ENCODE measurements at regions of chr6 and their contacts with region 1.

Region 1: DNA sequence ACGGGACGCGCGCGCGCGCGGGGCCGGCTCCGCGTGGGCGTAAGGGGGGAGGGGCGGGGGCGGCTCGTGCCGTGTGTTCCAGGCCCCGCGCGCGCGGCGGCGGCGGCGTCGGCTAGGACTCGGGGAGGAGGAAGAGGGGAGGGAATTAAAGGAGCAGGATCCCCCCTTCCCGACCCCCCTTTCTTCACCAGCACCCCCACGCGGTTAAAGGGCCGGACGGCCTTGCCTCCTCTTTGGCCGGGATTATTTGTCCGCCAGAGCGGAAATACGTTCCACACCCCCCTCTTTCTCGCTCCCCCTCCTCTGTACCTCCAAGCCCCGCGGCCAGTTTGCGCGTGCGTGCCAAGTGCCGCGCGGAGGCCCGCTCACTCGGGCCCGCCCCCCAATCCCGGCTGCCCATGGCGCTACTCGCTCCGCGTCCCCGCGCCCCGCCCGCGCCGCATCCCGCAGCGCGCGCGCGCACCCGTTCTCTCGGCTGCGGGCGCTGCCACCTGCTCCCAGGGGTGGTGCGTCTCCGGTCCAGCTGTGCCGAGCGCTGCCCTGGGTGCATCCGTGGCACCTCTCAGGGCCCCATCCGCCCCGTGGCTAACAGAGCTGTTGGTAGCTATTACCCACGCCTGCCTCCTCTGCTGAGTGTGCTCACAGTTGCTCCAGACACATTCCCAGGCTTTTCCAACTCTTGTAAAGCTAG is at the start of gene ZBTB12:
- DNase-seq: peak; percentile 92 to 94
- H3K4me3 ChIP-seq: peak within 1 kb of the TSS; percentile 68
- H3K4me3 Mint-ChIP-seq: peak within 1 kb of the TSS; percentile 73
- H3K27ac Mint-ChIP-seq: peak within 1 kb of the TSS; percentile 58
- H3K4me1 ChIP-seq: peaks cover 19% of the 10 kb centered on the region
- H3K4me1 Mint-ChIP-seq: peaks cover 20% of the 10 kb centered on the region
- H3K27me3 ChIP-seq: no peaks in the 10 kb centered on the region
- H3K27me3 Mint-ChIP-seq: no peaks in the 10 kb centered on the region
- CTCF ChIP-seq: no peak
- total RNA-seq, gene ZBTB12: 9.6 and 11.7 TPM in 2 replicates

Region 2: GRCh38 chr6:31887173-31888007 is 14.7 kb before region 1 on chr6:
- CTCF ChIA-PET with region 1: interaction called, 11 read pairs
- POLR2A ChIA-PET with region 1: interaction called, 3 read pairs
- intact Hi-C with region 1: no loop called
- DNase-seq: no peak
- H3K4me3 ChIP-seq: no peak overlapping the region
- H3K4me3 Mint-ChIP-seq: no peak overlapping the region
- H3K27ac Mint-ChIP-seq: no peak overlapping the region
- H3K4me1 ChIP-seq: no peaks in the 10 kb centered on the region
- H3K4me1 Mint-ChIP-seq: no peaks in the 10 kb centered on the region
- H3K27me3 ChIP-seq: no peaks in the 10 kb centered on the region
- H3K27me3 Mint-ChIP-seq: no peaks in the 10 kb centered on the region
- CTCF ChIP-seq: no peak

Region 3: DNA sequence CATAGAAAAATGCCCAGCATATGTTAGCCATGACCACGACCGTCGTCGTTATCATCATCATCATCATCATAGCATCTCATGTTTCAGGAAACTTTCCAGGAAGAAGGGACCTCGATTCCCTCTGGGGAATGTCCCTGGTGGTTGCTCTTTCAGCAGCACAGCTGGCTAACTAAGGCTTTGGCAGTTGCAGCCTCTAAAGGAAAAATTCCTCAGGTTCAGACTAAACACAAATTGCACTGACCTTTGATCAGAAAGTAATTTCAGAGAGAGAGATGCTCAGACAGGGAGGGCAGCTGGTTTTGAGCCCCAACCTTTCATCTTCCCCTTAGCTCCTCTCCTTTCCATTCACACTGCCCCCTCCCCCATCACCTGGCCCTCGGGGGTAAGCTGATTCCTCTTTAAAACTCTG is 38.2 kb after region 1 on chr6:
- CTCF ChIA-PET with region 1: interaction called, 3 read pairs
- POLR2A ChIA-PET with region 1: interaction called, 19 read pairs
- intact Hi-C with region 1: loop called (anchors 2 kb)
- DNase-seq: peak; percentile 66 to 73
- H3K4me3 ChIP-seq: no peak overlapping the region
- H3K4me3 Mint-ChIP-seq: peak overlapping the region; percentile 42
- H3K27ac Mint-ChIP-seq: peak overlapping the region; percentile 89
- H3K4me1 ChIP-seq: peaks cover 28% of the 10 kb centered on the region
- H3K4me1 Mint-ChIP-seq: peaks cover 26% of the 10 kb centered on the region
- H3K27me3 ChIP-seq: no peaks in the 10 kb centered on the region
- H3K27me3 Mint-ChIP-seq: no peaks in the 10 kb centered on the region
- CTCF ChIP-seq: peak; percentile 8

Region 4: GRCh38 chr6:31945507-31946369 is 43.6 kb after region 1 on chr6 and contains the start of gene CFB:
- CTCF ChIA-PET with region 1: interaction called, 5 read pairs
- POLR2A ChIA-PET with region 1: interaction called, 19 read pairs
- intact Hi-C with region 1: loop called (anchors 2 kb)
- DNase-seq: peak; percentile 88 to 93
- H3K4me3 ChIP-seq: peak within 1 kb of the TSS; percentile 33
- H3K4me3 Mint-ChIP-seq: peak within 1 kb of the TSS; percentile 58
- H3K27ac Mint-ChIP-seq: peak within 1 kb of the TSS; percentile 94
- H3K4me1 ChIP-seq: peaks cover 41% of the 10 kb centered on the region
- H3K4me1 Mint-ChIP-seq: peaks cover 49% of the 10 kb centered on the region
- H3K27me3 ChIP-seq: no peaks in the 10 kb centered on the region
- H3K27me3 Mint-ChIP-seq: no peaks in the 10 kb centered on the region
- CTCF ChIP-seq: no peak
- total RNA-seq, gene CFB: 31.0 and 32.1 TPM in 2 replicates

Region 5: GRCh38 chr6:31952140-31952805 is 50.2 kb after region 1 on chr6:
- CTCF ChIA-PET with region 1: interaction called, 24 read pairs
- POLR2A ChIA-PET with region 1: interaction called, 5 read pairs
- intact Hi-C with region 1: loop called (anchors 1 kb)
- DNase-seq: peak; percentile 65 to 80
- H3K4me3 ChIP-seq: no peak overlapping the region
- H3K4me3 Mint-ChIP-seq: no peak overlapping the region
- H3K27ac Mint-ChIP-seq: no peak overlapping the region
- H3K4me1 ChIP-seq: peaks cover 7% of the 10 kb centered on the region
- H3K4me1 Mint-ChIP-seq: peaks cover 24% of the 10 kb centered on the region
- H3K27me3 ChIP-seq: no peaks in the 10 kb centered on the region
- H3K27me3 Mint-ChIP-seq: no peaks in the 10 kb centered on the region
- CTCF ChIP-seq: peak; percentile 70 to 91

Region 6: GRCh38 chr6:31971993-31972708 is 70.1 kb after region 1 on chr6 and contains the start of gene DXO:
- CTCF ChIA-PET with region 1: interaction called, 3 read pairs
- POLR2A ChIA-PET with region 1: interaction called, 10 read pairs
- intact Hi-C with region 1: no loop called
- DNase-seq: peak; percentile 97 to 98
- H3K4me3 ChIP-seq: peak within 1 kb of the TSS; percentile 76
- H3K4me3 Mint-ChIP-seq: peak within 1 kb of the TSS; percentile 67
- H3K27ac Mint-ChIP-seq: peak within 1 kb of the TSS; percentile 82
- H3K4me1 ChIP-seq: peaks cover 5% of the 10 kb centered on the region; the same call in 1 of the 2 replicates
- H3K4me1 Mint-ChIP-seq: peaks cover 21% of the 10 kb centered on the region
- H3K27me3 ChIP-seq: no peaks in the 10 kb centered on the region
- H3K27me3 Mint-ChIP-seq: no peaks in the 10 kb centered on the region
- CTCF ChIP-seq: no peak
- total RNA-seq, gene DXO: 22.4 and 23.7 TPM in 2 replicates

Region 7: GRCh38 chr6:32108094-32108627 is 206.1 kb after region 1 on chr6:
- CTCF ChIA-PET with region 1: no interaction called
- POLR2A ChIA-PET with region 1: no interaction called
- intact Hi-C with region 1: no loop called
- DNase-seq: no peak
- H3K4me3 ChIP-seq: no peak overlapping the region
- H3K4me3 Mint-ChIP-seq: peak overlapping the region; percentile 47
- H3K27ac Mint-ChIP-seq: no peak overlapping the region
- H3K4me1 ChIP-seq: peaks cover 15% of the 10 kb centered on the region
- H3K4me1 Mint-ChIP-seq: peaks cover 22% of the 10 kb centered on the region
- H3K27me3 ChIP-seq: no peaks in the 10 kb centered on the region
- H3K27me3 Mint-ChIP-seq: no peaks in the 10 kb centered on the region
- CTCF ChIP-seq: no peak

Region 8: GRCh38 chr6:32118782-32119628 is 216.9 kb after region 1 on chr6:
- CTCF ChIA-PET with region 1: no interaction called
- POLR2A ChIA-PET with region 1: no interaction called
- intact Hi-C with region 1: loop called (anchors 5 kb)
- DNase-seq: peak; percentile 86 to 91
- H3K4me3 ChIP-seq: no peak overlapping the region
- H3K4me3 Mint-ChIP-seq: peak overlapping the region; percentile 60
- H3K27ac Mint-ChIP-seq: peak overlapping the region; percentile 77
- H3K4me1 ChIP-seq: peaks cover 4% of the 10 kb centered on the region
- H3K4me1 Mint-ChIP-seq: peaks cover 16% of the 10 kb centered on the region
- H3K27me3 ChIP-seq: no peaks in the 10 kb centered on the region
- H3K27me3 Mint-ChIP-seq: no peaks in the 10 kb centered on the region
- CTCF ChIP-seq: peak; percentile 89 to 95

Measured in Caco-2 (cell line).